Gastrocnemius medialis (tissue), 4 donors: ENCODE measurements at regions of chr3 and their contacts with region 1.

Region 1: GRCh38 chr3:53891497-53892285 is at the start of gene SELENOK:
- DNase-seq: peak; percentile 98 to 99
- ATAC-seq: peak; percentile 98 to 99
- H3K4me3 ChIP-seq: peak within 1 kb of the TSS; percentile 66 to 98 (median 96)
- H3K27ac ChIP-seq: peak within 1 kb of the TSS; percentile 92 to 97 (median 95)
- H3K4me1 ChIP-seq: peaks cover 14 to 22% of the 10 kb centered on the region in 2 donors
- H3K27me3 ChIP-seq: no peaks in the 10 kb centered on the region
- CTCF ChIP-seq: no peak
- POLR2A ChIP-seq: peak; percentile 95 to 96
- total RNA-seq, gene SELENOK: 73.1 to 95.4 (median 80.8) TPM

Region 2: DNA sequence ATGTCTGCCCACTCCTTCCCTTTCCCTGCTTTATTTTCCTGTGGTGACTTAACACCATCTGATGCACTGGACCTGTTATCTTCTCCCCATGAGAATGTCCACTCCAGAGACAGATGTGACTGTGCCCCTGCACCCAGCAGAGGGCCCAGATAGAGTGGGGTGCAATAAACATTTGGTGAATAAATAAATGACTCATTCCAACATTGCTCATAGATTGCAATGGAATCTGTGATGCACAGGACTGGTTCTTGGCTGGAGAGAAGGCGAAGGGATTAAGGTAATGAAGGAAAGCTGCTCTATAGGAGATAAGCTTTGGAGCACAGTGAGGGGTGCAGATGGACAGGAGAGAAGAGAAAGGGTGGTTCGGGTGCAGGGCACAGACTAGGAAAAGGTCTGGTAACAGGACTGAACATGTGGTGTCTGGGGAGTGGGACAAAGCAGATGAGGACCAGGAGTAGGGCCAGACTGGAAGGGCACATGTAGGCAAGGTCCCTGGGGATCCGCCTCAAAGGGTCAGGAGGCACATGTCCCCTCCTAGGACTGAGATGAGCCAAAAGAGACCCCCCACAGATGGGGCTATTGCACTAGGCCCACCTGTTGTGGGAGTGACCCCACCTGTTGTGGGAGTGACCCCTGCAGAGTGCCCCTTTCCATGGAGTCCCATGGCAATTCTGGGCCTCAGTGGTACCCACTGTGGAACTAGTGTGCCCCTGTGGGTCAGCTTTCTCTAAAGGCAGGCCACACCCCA is 1720.0 kb before region 1 on chr3:
- in situ Hi-C with region 1: no loop called
- intact Hi-C with region 1: loop called (anchors 10 kb)
- DNase-seq: no peak
- ATAC-seq: no peak
- H3K4me3 ChIP-seq: no peak overlapping the region
- H3K27ac ChIP-seq: no peak overlapping the region
- H3K4me1 ChIP-seq: no peaks in the 10 kb centered on the region
- H3K27me3 ChIP-seq: no peaks in the 10 kb centered on the region
- CTCF ChIP-seq: no peak
- POLR2A ChIP-seq: no peak

Region 3: DNA sequence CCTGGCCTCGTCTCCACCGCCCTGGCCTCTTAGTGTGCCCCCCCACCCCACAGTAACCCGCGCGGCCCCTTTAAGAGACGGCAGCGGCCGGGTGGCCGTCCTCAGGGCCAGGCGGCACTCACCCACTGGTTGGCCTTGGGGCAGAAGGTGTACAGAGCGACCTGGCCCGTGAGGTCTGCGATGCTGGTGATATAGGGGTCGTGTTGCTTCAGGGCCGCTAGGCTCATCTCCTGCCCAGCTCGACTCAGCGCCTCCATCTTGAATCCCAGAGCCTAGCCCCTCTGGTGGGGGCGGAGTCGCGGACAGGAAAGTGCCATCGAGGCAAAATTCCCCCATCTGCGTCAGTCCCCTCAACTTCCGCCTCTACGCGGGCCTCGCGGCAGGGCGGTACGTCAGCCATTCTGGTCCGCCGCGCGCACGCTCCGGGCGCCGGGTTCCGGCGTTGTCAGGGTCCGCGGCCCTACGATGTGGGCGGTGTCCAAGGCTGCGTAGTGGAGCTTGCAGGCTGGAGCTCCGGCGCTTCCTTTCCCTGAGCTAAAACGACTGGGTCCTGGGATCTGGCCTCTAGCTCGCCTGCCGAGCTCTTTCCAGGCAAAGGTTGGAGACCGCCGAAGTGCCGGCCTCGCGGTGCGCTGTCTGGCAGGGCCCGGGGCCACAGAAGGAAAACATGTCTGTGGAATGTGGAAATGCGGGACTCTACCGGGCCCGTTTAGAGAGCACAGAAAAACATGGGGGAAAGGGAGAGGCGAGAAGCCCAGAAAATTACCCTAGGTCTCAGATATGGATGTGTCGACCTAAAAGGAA is 544.2 kb before region 1 on chr3 and contains the start of gene DCP1A:
- in situ Hi-C with region 1: loop called in 1 of 4 experiments (anchors 25 kb)
- intact Hi-C with region 1: loop called (anchors 1 kb)
- DNase-seq: peak; percentile 92 to 94
- ATAC-seq: peak; percentile 98
- H3K4me3 ChIP-seq: peak within 1 kb of the TSS; percentile 93 to 99 (median 98)
- H3K27ac ChIP-seq: peak within 1 kb of the TSS; percentile 97 to 99 (median 98)
- H3K4me1 ChIP-seq: peaks cover 9 to 30% of the 10 kb centered on the region in 2 donors
- H3K27me3 ChIP-seq: no peaks in the 10 kb centered on the region
- CTCF ChIP-seq: peak in 1 of 5 experiments; percentile 17
- POLR2A ChIP-seq: peak; percentile 87 to 88
- total RNA-seq, gene DCP1A: 10.9 to 18.4 (median 15.2) TPM

Region 4: DNA sequence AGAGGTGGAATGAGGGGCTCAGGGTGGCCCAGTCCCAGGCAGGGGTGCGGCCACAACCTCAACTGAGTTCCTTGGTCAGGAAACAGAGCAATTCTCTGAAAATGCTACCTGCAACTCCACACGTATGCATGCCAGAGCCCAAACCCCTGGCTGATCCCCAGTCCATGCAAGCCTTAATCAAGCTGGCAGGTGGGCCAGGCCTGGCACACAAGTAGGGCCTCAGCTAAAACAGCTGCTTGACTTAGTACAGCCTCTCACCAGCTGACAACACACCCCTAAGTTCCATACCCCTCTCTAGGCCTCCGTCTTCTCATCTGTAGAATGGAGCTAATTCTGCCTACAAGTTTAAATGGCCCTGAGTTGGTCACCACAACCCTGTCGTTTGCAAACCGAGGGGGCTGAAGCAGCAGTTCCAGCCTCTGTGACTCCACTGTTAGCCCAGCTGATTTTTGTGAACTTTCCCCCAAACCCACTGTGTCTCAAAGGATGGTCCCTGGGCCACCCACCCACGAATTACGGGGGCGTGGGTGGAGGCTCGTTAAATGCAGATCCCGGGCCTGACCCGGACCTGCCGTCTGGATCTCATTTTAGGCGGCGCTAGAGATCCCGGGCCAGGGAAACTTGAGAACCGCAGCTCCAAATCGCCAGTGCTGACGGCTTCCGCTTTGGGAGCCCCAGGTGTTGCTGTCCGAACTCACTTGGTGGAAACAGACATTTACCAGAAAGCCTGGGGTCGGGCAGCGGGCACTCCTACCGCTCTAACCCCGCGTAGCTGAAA is 46.4 kb before region 1 on chr3:
- in situ Hi-C with region 1: no loop called
- intact Hi-C with region 1: loop called (anchors 2 kb)
- DNase-seq: peak; percentile 51 to 70
- ATAC-seq: peak; percentile 88 to 89
- H3K4me3 ChIP-seq: peak overlapping the region; percentile 67 to 82 (median 74)
- H3K27ac ChIP-seq: peak overlapping the region; percentile 74 to 88 (median 86)
- H3K4me1 ChIP-seq: peaks cover 0 to 5% of the 10 kb centered on the region in 2 donors
- H3K27me3 ChIP-seq: no peaks in the 10 kb centered on the region
- CTCF ChIP-seq: peak in 3 of 5 experiments; percentile 3 to 50 (median 39)
- POLR2A ChIP-seq: peak in 1 of 2 donors; percentile 44

Region 5: DNA sequence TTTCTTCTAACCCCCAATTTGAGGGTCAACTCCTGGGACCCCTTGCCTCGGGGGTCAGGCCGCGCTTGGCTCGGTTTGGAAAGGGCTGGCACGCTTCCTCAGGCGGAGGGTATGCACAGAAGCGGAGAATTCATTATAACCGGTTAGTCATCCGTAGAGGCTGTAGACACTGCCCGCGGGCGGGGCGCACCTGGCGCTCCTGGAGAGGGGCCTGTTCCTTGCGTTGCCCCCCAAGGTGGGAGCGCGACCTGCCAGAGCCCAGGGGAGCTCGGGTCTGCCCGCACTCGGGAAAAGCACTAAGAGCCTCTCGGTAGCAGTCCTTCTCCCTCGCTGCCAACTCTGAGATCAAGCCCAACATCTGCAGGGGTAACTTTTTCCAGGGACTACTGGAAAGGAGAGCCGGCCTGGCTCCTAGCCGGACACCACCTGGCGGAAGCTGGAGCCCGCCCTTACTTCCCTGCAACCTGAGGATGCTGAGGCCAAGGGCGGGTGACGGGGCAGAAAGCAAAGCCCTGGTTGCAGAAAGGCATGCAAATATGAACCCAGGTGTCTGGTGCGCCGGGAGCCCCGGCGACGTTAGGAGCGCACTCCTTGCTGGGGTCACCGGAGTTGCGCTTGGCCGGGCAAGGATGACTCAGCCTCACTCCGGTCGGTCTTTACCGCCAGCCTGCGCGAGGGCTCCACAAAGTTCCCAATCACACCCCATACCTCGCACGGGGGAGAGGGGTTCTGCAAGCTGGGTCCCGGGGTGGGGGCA is 229.1 kb after region 1 on chr3:
- in situ Hi-C with region 1: no loop called
- intact Hi-C with region 1: loop called (anchors 5 kb)
- DNase-seq: peak in 1 of 2 donors; percentile 36
- ATAC-seq: peak; percentile 28 to 31
- H3K4me3 ChIP-seq: peak overlapping the region; percentile 64 to 79 (median 76)
- H3K27ac ChIP-seq: peak overlapping the region; percentile 83 to 87 (median 86)
- H3K4me1 ChIP-seq: peaks cover 18 to 27% of the 10 kb centered on the region in 2 donors
- H3K27me3 ChIP-seq: no peaks in the 10 kb centered on the region
- CTCF ChIP-seq: no peak
- POLR2A ChIP-seq: no peak

Region 6: DNA sequence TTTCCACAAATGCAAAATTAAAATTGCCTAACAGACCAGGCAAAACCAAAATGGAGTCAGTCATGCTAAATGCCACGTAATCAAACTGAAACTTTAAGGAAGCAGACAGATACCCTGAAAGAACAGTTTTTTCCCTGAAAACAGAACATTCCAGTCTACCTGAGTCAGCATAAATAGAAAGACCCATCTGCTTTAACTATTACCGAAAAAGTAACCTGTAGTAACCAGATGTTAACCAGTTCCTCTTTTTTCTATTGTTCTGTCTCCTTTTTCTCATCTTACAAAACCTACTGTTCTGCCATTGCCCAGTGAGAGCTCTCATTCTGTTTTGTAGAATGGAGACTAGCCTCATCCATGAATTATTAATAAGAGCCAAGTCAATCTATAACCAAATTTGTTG is 516.6 kb after region 1 on chr3:
- in situ Hi-C with region 1: no loop called
- intact Hi-C with region 1: no loop called
- DNase-seq: no peak
- ATAC-seq: no peak
- H3K4me3 ChIP-seq: no peak overlapping the region
- H3K27ac ChIP-seq: no peak overlapping the region
- H3K4me1 ChIP-seq: no peaks in the 10 kb centered on the region
- H3K27me3 ChIP-seq: no peaks in the 10 kb centered on the region
- CTCF ChIP-seq: no peak
- POLR2A ChIP-seq: no peak